ENCODE measurements at regions of chr2 and their contacts with region 1.

Region 1: GRCh38 chr2:54570925-54571694 is 115.0 kb downstream of the SPTBN1 start:
- DNase-seq: peak; percentile 81
- H3K4me3 Mint-ChIP-seq: peak overlapping the region; percentile 62
- H3K27ac Mint-ChIP-seq: peak overlapping the region; percentile 97
- H3K4me1 Mint-ChIP-seq: peaks cover 77% of the 10 kb centered on the region
- H3K27me3 Mint-ChIP-seq: no peaks in the 10 kb centered on the region

Region 2: DNA sequence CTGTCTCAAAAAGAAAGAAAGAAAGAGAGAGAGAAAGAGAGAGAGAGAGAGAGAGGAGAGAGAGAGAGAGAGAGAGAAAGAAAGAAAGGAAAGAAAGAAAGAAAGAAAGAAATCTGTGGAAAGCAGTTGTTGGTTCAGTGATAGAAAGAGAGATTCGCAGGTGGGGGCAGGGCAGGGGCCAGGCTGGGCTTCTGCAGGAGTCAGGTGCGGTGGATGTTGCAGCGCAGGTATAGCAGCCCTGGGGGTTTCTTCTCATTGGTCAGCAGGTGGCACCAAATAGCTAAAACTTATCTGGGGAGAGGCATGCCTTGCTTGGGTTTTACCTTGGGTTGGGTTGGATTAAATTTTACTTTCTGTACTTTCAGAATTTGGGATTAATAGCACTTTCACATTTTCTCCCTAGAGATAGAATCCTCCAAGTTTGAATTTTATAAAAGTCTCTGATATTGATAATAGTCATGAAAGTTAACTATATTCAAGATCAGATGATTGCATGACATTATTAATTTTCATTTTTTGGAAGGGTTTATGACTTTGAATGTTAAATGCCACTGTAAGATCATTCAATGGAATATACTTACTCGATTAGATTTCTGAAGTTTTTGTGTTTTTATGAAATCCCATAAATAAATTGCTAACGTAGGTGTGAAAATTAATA is 48.4 kb before region 1 on chr2:
- intact Hi-C with region 1: loop called (anchors 1 kb)
- DNase-seq: peak; percentile 47
- H3K4me3 Mint-ChIP-seq: no peak overlapping the region
- H3K27ac Mint-ChIP-seq: no peak overlapping the region
- H3K4me1 Mint-ChIP-seq: peaks cover 25% of the 10 kb centered on the region
- H3K27me3 Mint-ChIP-seq: peaks cover 25% of the 10 kb centered on the region

Region 3: DNA sequence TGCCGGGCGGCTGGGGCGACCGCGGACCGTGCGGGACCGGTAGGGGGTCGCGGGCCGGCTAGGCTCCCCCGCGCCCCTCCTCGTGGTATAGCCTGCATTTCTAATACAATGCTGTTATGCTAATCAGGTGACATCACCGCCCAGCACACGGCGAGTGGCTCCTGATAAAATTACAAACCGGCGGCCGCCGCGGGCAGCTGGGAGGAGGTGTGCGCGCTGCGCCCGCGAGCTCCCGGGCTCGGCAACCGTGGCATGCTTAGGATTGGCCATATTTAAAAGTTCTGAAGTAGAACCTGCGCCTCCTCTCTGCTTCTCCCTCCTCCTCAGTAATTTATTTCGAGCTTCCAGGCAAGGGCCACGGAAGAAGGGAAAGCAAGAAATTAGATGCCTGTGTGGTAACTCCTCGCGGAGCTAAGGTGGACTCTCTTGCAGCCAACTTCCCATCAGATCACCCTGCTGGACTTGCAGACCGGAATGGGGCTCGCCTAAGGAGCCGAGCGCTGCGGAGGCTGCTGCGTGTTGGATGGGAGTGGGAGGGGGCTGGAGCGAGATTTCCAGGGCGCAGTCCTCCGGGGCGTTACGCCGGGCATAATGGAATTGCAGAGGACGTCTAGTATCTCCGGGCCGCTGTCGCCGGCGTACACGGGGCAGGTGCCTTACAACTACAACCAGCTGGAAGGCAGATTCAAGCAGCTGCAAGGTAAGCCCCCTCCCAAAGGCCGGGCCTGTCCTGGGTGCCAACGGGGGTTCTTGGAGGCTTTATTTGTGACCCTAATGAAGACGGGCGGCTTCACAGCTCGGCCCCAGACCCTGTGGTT is 12.7 kb before region 1 on chr2:
- intact Hi-C with region 1: loop called (anchors 1 kb)
- DNase-seq: peak; percentile 69
- H3K4me3 Mint-ChIP-seq: peak overlapping the region; percentile 90
- H3K27ac Mint-ChIP-seq: peak overlapping the region; percentile 73
- H3K4me1 Mint-ChIP-seq: peaks cover 51% of the 10 kb centered on the region
- H3K27me3 Mint-ChIP-seq: no peaks in the 10 kb centered on the region

Region 4: DNA sequence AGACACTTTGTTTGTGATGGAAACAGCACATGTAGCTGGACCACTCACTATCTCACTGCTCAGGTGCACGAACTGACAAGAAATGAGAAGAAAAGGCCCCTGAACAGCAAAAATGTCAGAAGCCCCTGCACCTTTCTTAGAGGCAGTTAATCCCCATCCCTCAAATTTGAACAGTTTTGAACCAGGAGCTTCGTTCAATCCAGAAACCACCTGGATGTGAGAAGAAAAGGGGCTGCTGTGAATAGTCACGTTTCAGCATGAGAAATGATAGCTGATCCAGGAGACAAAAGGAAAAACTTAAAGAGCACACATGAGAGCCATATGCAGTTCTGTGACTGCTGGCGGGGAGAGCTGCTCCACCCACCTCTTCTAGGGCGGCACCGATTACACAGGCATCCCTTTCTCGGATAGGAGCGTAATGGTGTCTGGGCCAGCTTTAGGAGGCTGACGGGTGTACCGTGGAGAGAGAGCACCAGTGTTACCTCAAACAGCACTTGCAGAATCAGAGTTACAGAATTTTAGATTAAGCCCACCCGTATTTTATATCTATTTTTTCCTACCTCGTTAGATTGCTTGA is 35.4 kb after region 1 on chr2:
- intact Hi-C with region 1: loop called (anchors 1 kb)
- DNase-seq: no peak
- H3K4me3 Mint-ChIP-seq: peak overlapping the region; percentile 31
- H3K27ac Mint-ChIP-seq: peak overlapping the region; percentile 81
- H3K4me1 Mint-ChIP-seq: peaks cover 76% of the 10 kb centered on the region
- H3K27me3 Mint-ChIP-seq: no peaks in the 10 kb centered on the region

Region 5: GRCh38 chr2:54723131-54723995 is 152.3 kb after region 1 on chr2 and contains the start of gene EML6:
- intact Hi-C with region 1: loop called (anchors 1 kb)
- DNase-seq: peak; percentile 99
- H3K4me3 Mint-ChIP-seq: peak within 1 kb of the TSS; percentile 89
- H3K27ac Mint-ChIP-seq: peak within 1 kb of the TSS; percentile 64
- H3K4me1 Mint-ChIP-seq: peaks cover 17% of the 10 kb centered on the region
- H3K27me3 Mint-ChIP-seq: peaks cover 77% of the 10 kb centered on the region
- total RNA-seq, gene EML6: 0.23 and 0.25 TPM in 2 replicates

Region 6: DNA sequence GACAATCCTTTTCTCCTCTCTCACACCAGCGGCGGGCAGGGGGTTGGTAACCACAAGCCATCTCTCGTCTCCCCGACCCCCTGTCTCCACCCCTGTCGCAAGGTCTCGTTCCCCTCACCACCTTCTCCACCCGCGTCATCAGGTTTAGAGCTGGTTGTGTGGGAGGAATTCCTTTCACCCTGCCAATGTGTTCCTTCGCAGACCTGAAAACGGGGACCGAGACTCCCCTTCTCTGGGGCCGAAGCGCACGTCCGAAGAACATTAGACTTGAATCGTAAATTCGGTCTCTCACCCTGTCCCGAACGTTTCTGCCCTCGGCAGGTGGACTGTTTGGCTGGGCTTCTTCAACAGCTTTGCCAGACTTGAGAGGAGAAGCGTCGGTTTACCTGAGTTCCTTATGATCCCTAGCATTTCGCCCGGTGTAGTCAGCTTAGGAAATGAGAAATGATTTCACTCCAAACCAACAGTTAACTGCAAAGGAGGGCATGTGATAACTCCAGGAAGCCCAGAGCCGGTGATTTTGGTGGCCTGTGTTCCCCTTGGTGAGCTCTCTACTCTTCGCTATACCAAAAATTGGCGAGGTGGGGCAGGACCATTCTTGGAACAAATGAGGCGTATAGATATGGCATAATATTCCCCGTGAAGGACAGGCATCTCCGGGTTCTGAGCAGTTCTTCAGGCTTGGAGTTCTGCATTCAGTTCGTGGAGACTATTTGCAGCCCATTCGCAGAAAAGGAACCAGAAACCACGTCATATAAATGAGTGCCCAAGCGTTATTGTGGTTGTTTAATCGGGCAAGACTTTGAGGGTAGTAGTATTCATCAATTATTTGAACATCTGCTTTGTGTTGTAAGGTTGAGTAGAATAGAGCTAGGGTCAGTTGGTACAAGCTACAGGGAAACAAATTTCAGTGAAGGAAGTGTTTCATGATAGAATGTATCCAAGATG is 949.1 kb after region 1 on chr2:
- intact Hi-C with region 1: loop called (anchors 5 kb)
- DNase-seq: no peak
- H3K4me3 Mint-ChIP-seq: peak overlapping the region; percentile 93
- H3K27ac Mint-ChIP-seq: peak overlapping the region; percentile 86
- H3K4me1 Mint-ChIP-seq: peaks cover 13% of the 10 kb centered on the region
- H3K27me3 Mint-ChIP-seq: no peaks in the 10 kb centered on the region

Measured in activated T-helper 2 cell treated with anti-CD3 and anti-CD28 coated beads, Interferon-gamma antibody, Interleukin-2, Interleukin-4, amounts not matched to agents 10 μg/mL and 5 μg/mL and 100 μg/mL, durations not matched to agents 14 hours and 24 hours and 36 hours (primary cell).